Activated CD4-positive, alpha-beta memory T cell treated with anti-CD3 and anti-CD28 coated beads for 36 hours (primary cell): ENCODE measurements at regions of chr7 and their contacts with region 1.

Region 1: GRCh38 chr7:140810830-140811556 is 113.7 kb downstream of the BRAF start:
- DNase-seq: peak; percentile 58
- H3K4me3 Mint-ChIP-seq: no peak overlapping the region
- H3K27ac Mint-ChIP-seq: no peak overlapping the region
- H3K4me1 Mint-ChIP-seq: no peaks in the 10 kb centered on the region
- H3K27me3 Mint-ChIP-seq: no peaks in the 10 kb centered on the region

Region 2: DNA sequence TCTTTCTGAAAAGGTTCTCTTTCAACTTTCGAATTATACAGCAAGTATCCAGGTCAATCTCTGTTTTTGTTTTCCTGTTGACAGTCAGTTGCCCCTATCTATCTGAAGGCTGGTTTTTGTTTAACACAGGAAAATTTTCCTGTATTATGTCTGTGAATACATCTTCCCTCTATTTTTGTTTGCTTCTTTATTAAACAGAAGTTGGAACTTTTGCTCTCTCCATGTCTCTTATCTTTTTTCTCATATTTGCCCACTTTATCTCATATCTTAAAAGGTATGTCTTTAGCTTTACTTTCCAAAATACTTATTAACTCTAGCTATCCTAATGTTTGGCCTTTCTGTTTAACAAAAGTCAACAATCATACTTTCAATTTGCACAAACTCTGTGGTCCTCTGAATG is 18.7 kb after region 1 on chr7:
- CTCF ChIA-PET with region 1: interaction called, 11 read pairs
- POLR2A ChIA-PET with region 1: no interaction called
- intact Hi-C with region 1: no loop called
- DNase-seq: no peak
- H3K4me3 Mint-ChIP-seq: no peak overlapping the region
- H3K27ac Mint-ChIP-seq: no peak overlapping the region
- H3K4me1 Mint-ChIP-seq: no peaks in the 10 kb centered on the region
- H3K27me3 Mint-ChIP-seq: no peaks in the 10 kb centered on the region

Region 3: GRCh38 chr7:140915935-140916555 is 105.1 kb after region 1 on chr7:
- CTCF ChIA-PET with region 1: no interaction called
- POLR2A ChIA-PET with region 1: no interaction called
- intact Hi-C with region 1: loop called (anchors 1 kb)
- DNase-seq: no peak
- H3K4me3 Mint-ChIP-seq: no peak overlapping the region
- H3K27ac Mint-ChIP-seq: no peak overlapping the region
- H3K4me1 Mint-ChIP-seq: peaks cover 61% of the 10 kb centered on the region
- H3K27me3 Mint-ChIP-seq: no peaks in the 10 kb centered on the region

Region 4: GRCh38 chr7:140983802-140984201 is 172.8 kb after region 1 on chr7:
- CTCF ChIA-PET with region 1: interaction called, 81 read pairs
- POLR2A ChIA-PET with region 1: no interaction called
- intact Hi-C with region 1: loop called (anchors 1 kb)
- DNase-seq: no peak
- H3K4me3 Mint-ChIP-seq: no peak overlapping the region
- H3K27ac Mint-ChIP-seq: no peak overlapping the region
- H3K4me1 Mint-ChIP-seq: no peaks in the 10 kb centered on the region
- H3K27me3 Mint-ChIP-seq: peaks cover 12% of the 10 kb centered on the region

Region 5: GRCh38 chr7:141754939-141755338 is 943.9 kb after region 1 on chr7:
- CTCF ChIA-PET with region 1: no interaction called
- POLR2A ChIA-PET with region 1: no interaction called
- intact Hi-C with region 1: no loop called
- DNase-seq: no peak
- H3K4me3 Mint-ChIP-seq: no peak overlapping the region
- H3K27ac Mint-ChIP-seq: no peak overlapping the region
- H3K4me1 Mint-ChIP-seq: no peaks in the 10 kb centered on the region
- H3K27me3 Mint-ChIP-seq: no peaks in the 10 kb centered on the region